HepG2 (cell line): ENCODE measurements at regions of chr4 and their contacts with region 1.

Region 1: GRCh38 chr4:158821228-158821971 is 52.6 kb downstream of the FNIP2 start:
- DNase-seq: no peak
- ATAC-seq: no peak; the same call in 2 of the 3 replicates
- H3K4me3 ChIP-seq: no peak overlapping the region
- H3K27ac ChIP-seq: peak overlapping the region; percentile 65
- H3K4me1 ChIP-seq: peaks cover 100% of the 10 kb centered on the region
- H3K27me3 ChIP-seq: no peaks in the 10 kb centered on the region
- CTCF ChIP-seq: no peak
- EP300 ChIP-seq: peak in 1 of 2 experiments; percentile 8; a peak in 1 of 4 replicates
- POLR2A ChIP-seq: no peak
- RAD21 ChIP-seq: no peak

Region 2: DNA sequence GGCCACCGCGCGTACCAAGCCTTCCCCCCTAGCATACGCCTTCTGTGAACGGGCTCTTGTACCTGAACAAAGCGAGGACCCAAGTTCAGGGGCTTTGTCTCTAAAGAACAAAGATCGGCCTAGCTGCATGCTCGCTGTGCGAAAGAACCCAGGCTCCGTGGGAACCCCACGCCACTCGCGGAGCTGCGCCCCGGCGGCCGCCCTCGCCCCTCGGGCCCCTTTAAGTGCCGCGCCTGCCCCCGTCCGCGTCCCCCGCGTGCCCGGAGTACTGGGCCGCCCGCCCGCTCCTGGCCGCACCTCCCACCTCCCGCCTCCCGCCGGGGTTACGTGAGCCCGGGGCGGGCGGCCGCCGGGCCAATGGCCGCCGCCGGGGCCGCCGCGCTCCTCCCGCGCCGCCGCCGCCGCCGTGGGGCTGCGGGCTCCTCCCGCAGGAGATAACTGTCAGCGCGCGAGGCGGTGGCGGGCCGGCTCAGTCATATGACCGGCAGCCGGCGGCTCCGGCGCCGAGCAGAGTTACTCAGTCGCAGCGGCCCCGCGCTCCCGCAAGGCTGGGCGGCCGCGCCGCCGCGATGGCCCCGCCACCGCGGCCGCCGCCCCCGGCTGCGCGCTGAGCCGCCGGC is 52.7 kb before region 1 on chr4 and contains the start of gene FNIP2:
- CTCF ChIA-PET with region 1: no interaction called
- POLR2A ChIA-PET with region 1: interaction called, 5 read pairs
- in situ Hi-C with region 1: no loop called
- intact Hi-C with region 1: loop called (anchors 5 kb)
- DNase-seq: peak; percentile 56
- ATAC-seq: peak; percentile 96
- H3K4me3 ChIP-seq: peak within 1 kb of the TSS; percentile 91 to 99 (median 92)
- H3K27ac ChIP-seq: peak within 1 kb of the TSS; percentile 92
- H3K4me1 ChIP-seq: peaks cover 54% of the 10 kb centered on the region
- H3K27me3 ChIP-seq: no peaks in the 10 kb centered on the region; a peak in 1 of 5 replicates
- CTCF ChIP-seq: no peak; the same call in 1 of the 2 replicates
- EP300 ChIP-seq: no peak
- POLR2A ChIP-seq: peak; percentile 75 to 91
- RAD21 ChIP-seq: no peak; the same call in 1 of the 2 replicates
- total RNA-seq, gene FNIP2: 15.5 and 21.8 TPM in 2 replicates

Region 3: DNA sequence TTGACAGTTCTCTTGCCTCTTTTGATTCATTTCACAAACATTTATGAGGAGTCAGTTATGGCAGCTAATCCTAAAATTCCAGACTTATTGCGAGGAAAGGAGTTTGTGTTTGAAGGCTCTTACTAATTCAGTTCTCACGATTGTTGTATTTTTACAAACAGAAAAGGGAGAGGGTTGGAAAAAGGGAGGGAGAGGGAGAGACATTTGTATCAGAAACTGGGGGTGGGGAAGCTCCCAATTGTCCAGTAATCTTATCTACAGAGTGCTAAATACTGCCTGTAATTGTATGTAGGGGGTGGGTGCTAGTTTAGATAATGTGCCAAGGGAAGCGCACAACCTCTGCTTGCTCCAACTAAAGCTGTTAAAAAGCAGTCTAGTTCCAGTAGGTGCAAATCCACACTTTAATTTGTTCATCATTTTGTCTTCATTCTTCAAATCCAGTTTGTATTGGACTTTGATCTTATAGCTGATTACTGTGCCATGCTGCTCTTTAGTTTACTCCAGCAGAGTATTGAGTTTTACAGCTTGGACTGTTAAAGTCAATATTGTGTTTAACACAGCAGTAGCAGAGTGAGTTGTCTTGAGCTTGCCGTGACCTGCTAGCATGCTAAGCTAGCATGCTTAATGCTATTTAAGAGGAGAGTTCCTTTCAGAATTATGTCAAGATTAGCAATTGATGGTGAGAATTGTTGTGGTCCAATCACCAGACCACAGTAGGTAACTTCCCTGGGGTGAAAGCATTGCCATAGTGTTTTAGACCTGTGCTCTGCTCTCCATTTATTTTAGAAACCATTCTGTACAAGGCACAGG is 38.6 kb before region 1 on chr4:
- CTCF ChIA-PET with region 1: no interaction called
- POLR2A ChIA-PET with region 1: interaction called, 5 read pairs
- in situ Hi-C with region 1: loop called (anchors 5 kb)
- intact Hi-C with region 1: loop called (anchors 2 kb)
- DNase-seq: peak; percentile 72
- ATAC-seq: peak; percentile 99
- H3K4me3 ChIP-seq: peak overlapping the region in 2 of 3 experiments; percentile 12 to 17; a peak in 1 of 6 replicates
- H3K27ac ChIP-seq: peak overlapping the region; percentile 68
- H3K4me1 ChIP-seq: peaks cover 77% of the 10 kb centered on the region
- H3K27me3 ChIP-seq: no peaks in the 10 kb centered on the region
- CTCF ChIP-seq: no peak
- EP300 ChIP-seq: peak in 1 of 2 experiments; percentile 25; a peak in 1 of 4 replicates
- POLR2A ChIP-seq: no peak
- RAD21 ChIP-seq: no peak

Region 4: DNA sequence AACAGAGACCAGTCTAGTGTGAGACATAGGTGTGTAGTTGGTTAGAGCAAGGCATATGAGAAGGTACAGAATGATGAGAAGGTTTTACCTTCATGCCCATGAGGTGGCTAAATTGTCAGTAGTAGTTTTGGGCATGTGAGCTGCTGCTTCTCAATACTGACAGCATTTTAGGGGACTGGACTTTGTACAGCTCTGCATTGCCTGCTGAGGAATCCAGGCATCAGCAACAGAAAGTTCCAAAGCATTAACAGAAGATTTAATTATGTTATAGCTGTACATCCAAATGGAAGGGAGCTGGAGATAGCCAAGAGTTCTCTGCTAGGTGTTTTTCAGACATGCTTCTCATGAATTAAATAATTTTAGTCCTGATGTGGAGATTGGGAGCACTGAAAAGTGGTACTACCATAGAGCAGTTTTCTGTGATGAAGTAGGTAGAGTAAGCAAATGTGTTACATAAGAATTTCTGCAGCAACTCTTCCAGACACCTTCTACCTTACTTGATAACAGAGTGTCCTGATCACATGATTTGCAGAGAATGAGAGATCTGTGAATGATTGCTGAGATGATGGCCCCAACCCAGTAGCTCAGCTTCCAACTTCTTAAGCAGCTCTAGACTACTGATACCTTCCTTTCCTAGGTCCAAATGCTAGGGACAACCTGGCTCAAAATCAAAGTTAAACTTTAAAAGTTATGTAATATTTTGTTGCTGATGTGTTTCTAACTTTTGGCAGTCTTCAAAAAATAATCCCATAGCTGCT is 22.2 kb before region 1 on chr4:
- CTCF ChIA-PET with region 1: no interaction called
- POLR2A ChIA-PET with region 1: no interaction called
- in situ Hi-C with region 1: no loop called
- intact Hi-C with region 1: loop called (anchors 2 kb)
- DNase-seq: no peak
- ATAC-seq: peak; percentile 65
- H3K4me3 ChIP-seq: no peak overlapping the region
- H3K27ac ChIP-seq: no peak overlapping the region
- H3K4me1 ChIP-seq: peaks cover 58% of the 10 kb centered on the region
- H3K27me3 ChIP-seq: no peaks in the 10 kb centered on the region
- CTCF ChIP-seq: no peak
- EP300 ChIP-seq: no peak
- POLR2A ChIP-seq: no peak
- RAD21 ChIP-seq: no peak